ENCODE measurements at regions of chr16 and their contacts with region 1.

Region 1: DNA sequence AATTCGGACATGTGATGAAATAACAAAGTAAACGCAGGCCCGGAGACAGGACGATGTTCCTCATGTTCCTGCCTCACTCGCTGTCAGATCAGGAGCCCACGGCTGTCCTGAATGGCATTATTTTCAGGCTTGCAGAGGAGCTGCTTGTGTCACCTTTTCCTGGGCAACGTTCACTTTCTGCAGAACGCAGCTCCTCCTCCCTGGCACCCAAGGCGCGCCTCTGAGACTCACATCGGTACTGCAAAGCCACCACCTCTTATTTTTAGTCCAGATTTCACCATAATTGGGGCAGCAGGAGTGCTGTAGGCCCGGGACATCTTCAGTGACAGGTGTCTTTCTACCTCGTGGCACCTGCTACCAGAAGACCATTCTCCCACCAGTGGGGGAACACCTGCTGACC is 8.0 kb upstream of the C16orf96 start:
- DNase-seq: no peak
- H3K4me3 ChIP-seq: no peak overlapping the region
- H3K27ac ChIP-seq: no peak overlapping the region
- H3K4me1 ChIP-seq: no peaks in the 10 kb centered on the region
- H3K27me3 ChIP-seq: no peaks in the 10 kb centered on the region
- CTCF ChIP-seq: no peak

Region 2: DNA sequence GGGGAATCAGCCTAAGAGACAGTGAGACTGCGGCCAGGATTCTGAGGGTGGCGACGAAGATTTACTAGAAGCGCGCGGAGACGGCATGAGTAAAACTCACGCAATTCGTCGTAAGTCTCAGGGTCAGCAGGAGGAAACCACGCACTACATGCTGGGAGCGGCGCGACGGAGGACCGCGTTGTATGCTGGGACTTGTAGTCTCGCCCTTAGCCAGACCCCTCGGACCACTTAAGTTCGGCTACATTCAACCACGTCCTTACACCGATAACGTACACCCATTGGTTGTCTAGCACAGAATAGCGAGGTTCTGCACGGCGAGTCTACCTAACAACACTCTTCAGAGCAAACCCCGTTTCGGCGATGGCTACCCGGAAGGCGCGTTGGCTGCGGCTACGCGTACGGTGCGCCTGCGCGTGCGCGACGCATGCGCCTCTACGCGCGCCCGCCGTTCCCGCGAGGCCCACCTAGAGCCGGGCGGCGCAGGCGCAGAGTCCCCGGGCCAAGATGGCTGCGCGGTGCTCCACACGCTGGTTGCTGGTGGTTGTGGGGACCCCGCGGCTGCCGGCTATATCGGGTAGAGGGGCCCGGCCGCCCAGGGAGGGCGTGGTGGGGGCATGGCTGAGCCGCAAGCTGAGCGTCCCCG is 122.6 kb before region 1 on chr16 and contains the start of gene DNAJA3:
- intact Hi-C with region 1: loop called (anchors 2 kb)
- DNase-seq: peak; percentile 63 to 96
- H3K4me3 ChIP-seq: peak within 1 kb of the TSS; percentile 83 to 85
- H3K27ac ChIP-seq: peak within 1 kb of the TSS; percentile 95 to 96
- H3K4me1 ChIP-seq: peaks cover 5 to 14% of the 10 kb centered on the region in 2 donors
- H3K27me3 ChIP-seq: no peaks in the 10 kb centered on the region
- CTCF ChIP-seq: no peak
- total RNA-seq, gene DNAJA3: 40.7 TPM